ENCODE measurements at regions of chr11 and their contacts with region 1.

Region 1: DNA sequence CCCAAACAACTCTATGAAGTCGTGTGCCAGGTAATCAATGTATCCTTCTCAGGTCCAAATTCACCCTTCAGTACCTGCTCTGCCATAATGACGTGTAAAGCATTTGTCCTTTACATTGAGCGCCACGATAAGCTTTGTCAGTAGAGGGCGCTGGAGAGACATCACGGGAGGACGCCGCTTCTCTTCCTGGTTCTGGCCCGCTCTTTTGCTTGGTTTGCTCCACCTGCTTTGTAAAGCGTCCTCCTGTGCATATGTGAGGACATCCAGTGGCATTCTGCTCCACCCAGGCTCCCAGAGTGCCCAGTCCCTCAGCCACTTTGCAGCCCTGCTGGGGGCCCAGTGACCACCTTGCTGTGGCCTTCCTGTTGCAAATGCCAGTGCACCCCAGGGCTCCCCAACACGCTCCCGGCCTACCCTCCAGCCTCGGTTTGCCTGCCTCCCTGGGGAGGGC is 61.1 kb downstream of the WT1 start:
- DNase-seq: no peak
- ATAC-seq: peak in 1 of 4 donors; percentile 34
- H3K4me3 ChIP-seq: no peak overlapping the region
- H3K27ac ChIP-seq: no peak overlapping the region
- H3K4me1 ChIP-seq: no peaks in the 10 kb centered on the region
- H3K27me3 ChIP-seq: no peaks in the 10 kb centered on the region
- CTCF ChIP-seq: no peak

Region 2: GRCh38 chr11:32435511-32435941 is 61.2 kb after region 1 on chr11 and contains the start of gene WT1:
- intact Hi-C with region 1: loop called in 1 of 3 experiments (anchors 10 kb)
- DNase-seq: no peak
- ATAC-seq: peak in 3 of 4 donors; percentile 40 to 51 (median 40)
- H3K4me3 ChIP-seq: peak within 1 kb of the TSS in 2 of 4 donors; percentile 12 to 34
- H3K27ac ChIP-seq: no peak within 1 kb of the TSS
- H3K4me1 ChIP-seq: no peaks in the 10 kb centered on the region
- H3K27me3 ChIP-seq: peaks cover 0 to 53% (median 7%) of the 10 kb centered on the region in 4 donors
- CTCF ChIP-seq: no peak
- total RNA-seq, gene WT1: 0.08 to 1.9 (median 0.57) TPM in 5 of 6 donors, not detected in the other